ENCODE measurements at regions of chr6 and their contacts with region 1.

Region 1: GRCh38 chr6:36759148-36759759 is 61.6 kb downstream of the RAB44 start:
- DNase-seq: peak; percentile 94
- H3K4me3 ChIP-seq: peak overlapping the region in 1 of 2 experiments; percentile 39; a peak in 1 of 4 replicates
- H3K27ac ChIP-seq: no peak overlapping the region
- H3K4me1 ChIP-seq: peaks cover 0 to 15% of the 10 kb centered on the region in 2 experiments; a peak in 2 of 4 replicates
- H3K27me3 ChIP-seq: no peaks in the 10 kb centered on the region
- CTCF ChIP-seq: peak; percentile 98
- EP300 ChIP-seq: no peak
- RAD21 ChIP-seq: peak; percentile 95

Region 2: GRCh38 chr6:36302227-36302976 is 456.9 kb before region 1 on chr6:
- CTCF ChIA-PET with region 1: interaction called, 10 read pairs
- POLR2A ChIA-PET with region 1: no interaction called
- DNase-seq: peak; percentile 82
- H3K4me3 ChIP-seq: peak overlapping the region in 1 of 2 experiments; percentile 21; a peak in 1 of 4 replicates
- H3K27ac ChIP-seq: no peak overlapping the region
- H3K4me1 ChIP-seq: no peaks in the 10 kb centered on the region; a peak in 1 of 4 replicates
- H3K27me3 ChIP-seq: no peaks in the 10 kb centered on the region
- CTCF ChIP-seq: peak; percentile 96
- EP300 ChIP-seq: no peak
- RAD21 ChIP-seq: peak; percentile 77

Region 3: DNA sequence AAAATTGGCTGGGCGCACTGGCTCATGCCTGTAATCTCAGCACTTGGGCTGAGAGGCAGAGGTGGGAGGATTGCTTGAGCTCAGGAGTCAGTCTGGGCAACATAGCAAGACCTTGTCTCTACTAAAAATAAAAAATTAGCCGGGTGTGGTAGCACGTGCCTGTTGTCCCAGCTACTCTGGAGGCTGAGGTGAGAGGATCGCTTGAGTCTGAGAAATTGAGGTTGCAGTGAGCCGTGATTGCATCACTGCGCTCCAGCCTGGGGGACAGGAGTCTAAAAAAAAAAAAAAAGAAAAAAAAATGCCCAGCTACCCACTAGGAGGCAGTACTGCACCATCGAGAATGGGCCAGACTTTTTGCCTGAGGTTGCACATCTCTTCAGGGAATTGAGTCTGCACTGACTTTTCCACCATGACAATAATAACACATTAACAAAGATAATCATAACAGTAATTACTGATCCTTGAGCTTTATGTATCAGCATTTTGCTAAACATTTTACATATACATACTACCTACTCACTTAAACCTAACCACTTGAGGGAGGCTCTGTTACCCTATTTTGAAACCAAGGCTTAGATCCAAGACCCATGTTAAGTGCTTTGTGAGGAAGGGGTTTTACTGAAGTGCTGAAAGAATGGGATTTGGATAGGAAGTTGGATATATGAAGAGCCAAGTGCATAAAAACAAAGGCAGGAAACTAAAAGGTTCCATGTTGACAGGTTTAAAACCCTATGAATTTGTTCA is 144.1 kb before region 1 on chr6:
- CTCF ChIA-PET with region 1: interaction called, 111 read pairs
- POLR2A ChIA-PET with region 1: interaction called, 4 read pairs
- DNase-seq: peak; percentile 49
- H3K4me3 ChIP-seq: no peak overlapping the region; a peak in 1 of 4 replicates
- H3K27ac ChIP-seq: peak overlapping the region; percentile 28 to 36; a peak in 2 of 4 replicates
- H3K4me1 ChIP-seq: peaks cover 15 to 23% of the 10 kb centered on the region in 2 experiments; a peak in 3 of 4 replicates
- H3K27me3 ChIP-seq: no peaks in the 10 kb centered on the region
- CTCF ChIP-seq: peak; percentile 86
- EP300 ChIP-seq: 0 out of 4 replicates have a peak, but pooled peaks of 1 of the 2 experiments have one; percentile 4
- RAD21 ChIP-seq: peak; percentile 85

Region 4: DNA sequence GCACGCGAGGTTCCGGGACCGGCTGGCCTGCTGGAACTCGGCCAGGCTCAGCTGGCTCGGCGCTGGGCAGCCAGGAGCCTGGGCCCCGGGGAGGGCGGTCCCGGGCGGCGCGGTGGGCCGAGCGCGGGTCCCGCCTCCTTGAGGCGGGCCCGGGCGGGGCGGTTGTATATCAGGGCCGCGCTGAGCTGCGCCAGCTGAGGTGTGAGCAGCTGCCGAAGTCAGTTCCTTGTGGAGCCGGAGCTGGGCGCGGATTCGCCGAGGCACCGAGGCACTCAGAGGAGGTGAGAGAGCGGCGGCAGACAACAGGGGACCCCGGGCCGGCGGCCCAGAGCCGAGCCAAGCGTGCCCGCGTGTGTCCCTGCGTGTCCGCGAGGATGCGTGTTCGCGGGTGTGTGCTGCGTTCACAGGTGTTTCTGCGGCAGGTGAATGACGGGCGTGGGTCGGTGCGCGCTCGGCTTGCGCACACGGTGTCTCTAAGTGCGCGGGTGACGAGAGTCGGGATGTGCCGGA is 80.7 kb before region 1 on chr6 and contains the start of gene CDKN1A:
- CTCF ChIA-PET with region 1: interaction called, 31 read pairs
- POLR2A ChIA-PET with region 1: no interaction called
- DNase-seq: peak; percentile 92
- H3K4me3 ChIP-seq: peak within 1 kb of the TSS; percentile 91 to 99
- H3K27ac ChIP-seq: peak within 1 kb of the TSS; percentile 87 to 94
- H3K4me1 ChIP-seq: peaks cover 27 to 49% of the 10 kb centered on the region in 2 experiments
- H3K27me3 ChIP-seq: no peaks in the 10 kb centered on the region
- CTCF ChIP-seq: no peak
- EP300 ChIP-seq: peak; percentile 52 to 58
- RAD21 ChIP-seq: peak; percentile 15; the same call in 1 of the 2 replicates
- polyA plus RNA-seq, gene CDKN1A: 747 and 824 TPM in 2 replicates

Region 5: DNA sequence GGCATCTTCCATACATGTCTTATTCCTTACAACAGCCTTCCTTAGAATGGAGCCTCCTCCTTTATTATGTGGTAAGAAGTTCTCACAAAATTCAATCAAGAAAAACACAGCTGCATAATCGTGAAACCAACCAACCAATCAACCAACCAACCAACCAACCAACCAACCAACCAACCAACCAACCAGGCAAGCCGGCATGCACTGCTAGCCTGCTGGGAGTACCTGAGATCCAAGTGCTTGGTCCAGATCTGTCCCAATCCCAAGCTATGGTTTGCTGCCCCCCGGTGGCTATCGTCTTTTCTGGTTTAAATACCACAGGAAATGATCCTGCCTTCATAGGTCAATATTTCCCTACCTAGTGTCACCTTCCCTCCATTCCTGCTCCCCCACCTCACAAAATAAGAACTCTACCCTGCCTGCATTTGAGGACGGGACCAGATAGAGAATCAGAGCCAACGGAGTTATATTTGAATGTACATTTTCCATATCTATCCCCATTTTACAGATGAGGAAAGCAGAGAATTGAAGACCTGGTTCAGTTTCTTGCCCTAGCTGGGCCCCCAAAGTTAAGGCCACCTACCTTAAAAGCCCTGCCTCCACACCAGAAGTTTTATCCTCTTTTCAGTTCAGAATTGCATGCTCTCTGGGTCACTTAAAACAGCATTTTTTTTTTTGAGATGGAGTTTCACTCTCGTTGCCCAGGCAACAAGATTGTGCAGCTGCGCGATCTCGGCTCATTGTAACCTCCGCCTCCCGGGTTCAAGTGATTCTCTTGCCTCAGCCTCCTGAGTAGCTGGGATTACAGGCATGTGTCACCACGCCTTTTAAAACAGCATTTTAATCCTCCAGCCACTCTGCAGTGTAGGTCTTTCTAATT is 34.5 kb before region 1 on chr6:
- CTCF ChIA-PET with region 1: interaction called, 12 read pairs
- POLR2A ChIA-PET with region 1: no interaction called
- DNase-seq: peak; percentile 85
- H3K4me3 ChIP-seq: no peak overlapping the region
- H3K27ac ChIP-seq: no peak overlapping the region
- H3K4me1 ChIP-seq: no peaks in the 10 kb centered on the region; a peak in 1 of 4 replicates
- H3K27me3 ChIP-seq: no peaks in the 10 kb centered on the region
- CTCF ChIP-seq: peak; percentile 71
- EP300 ChIP-seq: no peak
- RAD21 ChIP-seq: peak; percentile 85

Region 6: GRCh38 chr6:36780442-36781177 is 21.4 kb after region 1 on chr6:
- CTCF ChIA-PET with region 1: interaction called, 71 read pairs
- POLR2A ChIA-PET with region 1: no interaction called
- DNase-seq: no peak
- H3K4me3 ChIP-seq: no peak overlapping the region
- H3K27ac ChIP-seq: no peak overlapping the region
- H3K4me1 ChIP-seq: peaks cover 0 to 7% of the 10 kb centered on the region in 2 experiments; a peak in 1 of 4 replicates
- H3K27me3 ChIP-seq: 0 out of 2 replicates have a peak, but pooled peaks cover 7% of the 10 kb centered on the region
- CTCF ChIP-seq: no peak
- EP300 ChIP-seq: no peak
- RAD21 ChIP-seq: no peak

Region 7: GRCh38 chr6:36874443-36875249 is 115.4 kb after region 1 on chr6 and contains the start of gene PPIL1:
- CTCF ChIA-PET with region 1: interaction called, 72 read pairs
- POLR2A ChIA-PET with region 1: interaction called, 4 read pairs
- DNase-seq: peak; percentile 94
- H3K4me3 ChIP-seq: peak within 1 kb of the TSS; percentile 76 to 87
- H3K27ac ChIP-seq: peak within 1 kb of the TSS; percentile 95 to 100
- H3K4me1 ChIP-seq: peaks cover 0 to 10% of the 10 kb centered on the region in 2 experiments; a peak in 2 of 4 replicates
- H3K27me3 ChIP-seq: no peaks in the 10 kb centered on the region
- CTCF ChIP-seq: no peak
- EP300 ChIP-seq: peak in 1 of 2 experiments; percentile 6; a peak in 2 of 4 replicates
- RAD21 ChIP-seq: no peak
- polyA plus RNA-seq, gene PPIL1: 36.6 and 48.4 TPM in 2 replicates